ENCODE measurements at regions of chr15 and their contacts with region 1.

Region 1: DNA sequence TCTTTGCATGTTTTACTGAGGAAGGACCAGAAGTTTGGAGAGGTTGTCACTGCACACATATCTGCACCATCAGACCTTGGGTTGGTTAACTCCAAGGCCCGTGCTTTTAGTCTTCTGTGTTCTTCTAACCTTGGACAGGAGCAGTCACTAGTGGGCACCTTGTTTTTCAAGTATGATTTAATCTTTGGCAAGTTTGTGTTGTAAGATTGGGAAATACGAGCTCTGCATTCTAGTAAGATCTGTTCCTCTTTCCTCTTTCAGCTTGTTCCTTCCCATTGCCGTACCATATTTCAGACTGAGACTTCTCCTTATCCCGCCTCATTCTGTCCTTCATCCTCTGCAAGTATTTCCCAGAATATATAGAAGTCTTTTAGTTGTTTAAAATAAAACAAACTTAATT is 5.1 kb downstream of the TMOD2 start:
- DNase-seq: no peak
- ATAC-seq: no peak
- H3K4me3 ChIP-seq: no peak overlapping the region
- H3K27ac ChIP-seq: no peak overlapping the region
- H3K4me1 ChIP-seq: peaks cover 7 to 10% of the 10 kb centered on the region in 2 donors
- H3K27me3 ChIP-seq: no peaks in the 10 kb centered on the region
- CTCF ChIP-seq: no peak
- POLR2A ChIP-seq: no peak

Region 2: DNA sequence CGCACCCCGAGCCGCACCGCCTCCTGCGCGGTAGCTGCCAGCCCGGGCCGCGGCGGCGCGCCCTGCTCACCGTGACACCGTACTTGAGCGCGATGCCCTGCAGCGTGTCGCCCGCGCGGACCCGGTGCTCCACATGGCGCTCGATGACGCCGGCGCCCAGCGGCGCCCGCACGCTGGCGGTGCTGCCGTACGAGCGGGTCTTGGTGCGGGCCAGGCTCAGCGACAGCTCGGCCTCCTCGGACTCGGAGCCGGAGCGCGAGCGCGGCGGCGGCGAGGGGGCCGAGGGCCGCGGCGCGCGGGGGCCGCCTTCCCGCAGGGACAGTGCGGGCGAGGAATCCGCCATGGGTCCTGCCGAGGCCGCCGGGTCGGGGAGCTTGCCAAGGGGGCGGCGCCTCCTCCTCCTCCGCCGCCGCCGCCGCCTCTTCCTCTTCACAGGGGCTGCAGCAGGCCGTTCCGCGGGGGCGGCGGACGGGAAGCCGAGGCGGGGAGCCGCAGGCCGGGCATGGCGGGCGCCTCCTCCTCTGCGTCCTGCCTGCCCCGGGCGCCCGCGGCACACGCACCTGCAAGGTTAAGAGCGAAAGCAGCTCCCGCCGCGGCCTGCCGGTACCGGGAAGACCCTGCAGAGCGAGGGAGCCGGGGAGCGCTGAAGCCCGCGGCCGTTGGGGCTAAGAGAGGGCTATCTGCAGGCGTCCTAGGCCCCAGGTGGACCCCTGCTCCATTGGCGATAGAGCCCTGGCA is 19.0 kb before region 1 on chr15 and contains the start of gene LYSMD2:
- in situ Hi-C with region 1: no loop called
- intact Hi-C with region 1: loop called (anchors 2 kb)
- DNase-seq: peak; percentile 43 to 54
- ATAC-seq: peak; percentile 82 to 87
- H3K4me3 ChIP-seq: peak within 1 kb of the TSS; percentile 69 to 81 (median 70)
- H3K27ac ChIP-seq: peak within 1 kb of the TSS; percentile 74 to 84 (median 78)
- H3K4me1 ChIP-seq: peaks cover 23 to 35% of the 10 kb centered on the region in 2 donors
- H3K27me3 ChIP-seq: no peaks in the 10 kb centered on the region
- CTCF ChIP-seq: no peak
- POLR2A ChIP-seq: peak in 1 of 2 donors; percentile 16
- total RNA-seq, gene LYSMD2: 5.8 to 16.1 (median 10.6) TPM

Measured in gastrocnemius medialis (tissue), 4 donors.